Common myeloid progenitor, CD34-positive (primary cell): ENCODE measurements at regions of chr5 and their contacts with region 1.

Region 1: GRCh38 chr5:142145106-142145900 is 36.7 kb downstream of the NDFIP1 start:
- DNase-seq: peak; percentile 68 to 85 (median 79)
- H3K4me3 ChIP-seq: no peak overlapping the region
- H3K27ac ChIP-seq: no peak overlapping the region
- H3K4me1 ChIP-seq: no peaks in the 10 kb centered on the region
- H3K27me3 ChIP-seq: no peaks in the 10 kb centered on the region

Region 2: DNA sequence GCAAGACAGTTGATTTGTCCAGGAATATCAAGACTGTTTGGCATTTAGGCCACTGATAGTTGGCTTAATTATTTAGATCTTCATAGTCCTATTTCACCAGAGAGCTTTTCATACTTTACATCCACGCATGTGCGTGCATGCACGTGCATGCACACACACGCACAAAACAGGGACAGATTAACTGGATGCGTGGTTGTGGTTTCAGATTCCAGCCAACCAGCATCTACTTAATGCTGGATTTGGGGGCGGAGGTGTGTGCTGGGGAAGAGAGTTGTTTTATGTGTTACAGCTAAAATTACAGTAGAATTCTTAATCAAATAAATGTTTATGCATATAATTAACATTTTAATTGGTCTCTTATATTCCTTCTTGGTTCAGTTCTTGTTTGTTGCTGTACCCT is 169.1 kb before region 1 on chr5:
- CTCF ChIA-PET with region 1: interaction called, 10 read pairs
- POLR2A ChIA-PET with region 1: no interaction called
- DNase-seq: no peak
- H3K4me3 ChIP-seq: no peak overlapping the region
- H3K27ac ChIP-seq: no peak overlapping the region
- H3K4me1 ChIP-seq: no peaks in the 10 kb centered on the region
- H3K27me3 ChIP-seq: no peaks in the 10 kb centered on the region

Region 3: GRCh38 chr5:141992349-141992963 is 152.8 kb before region 1 on chr5:
- CTCF ChIA-PET with region 1: interaction called, 163 read pairs
- POLR2A ChIA-PET with region 1: no interaction called
- DNase-seq: peak; percentile 68 to 83 (median 72)
- H3K4me3 ChIP-seq: no peak overlapping the region
- H3K27ac ChIP-seq: no peak overlapping the region
- H3K4me1 ChIP-seq: no peaks in the 10 kb centered on the region
- H3K27me3 ChIP-seq: no peaks in the 10 kb centered on the region

Region 4: DNA sequence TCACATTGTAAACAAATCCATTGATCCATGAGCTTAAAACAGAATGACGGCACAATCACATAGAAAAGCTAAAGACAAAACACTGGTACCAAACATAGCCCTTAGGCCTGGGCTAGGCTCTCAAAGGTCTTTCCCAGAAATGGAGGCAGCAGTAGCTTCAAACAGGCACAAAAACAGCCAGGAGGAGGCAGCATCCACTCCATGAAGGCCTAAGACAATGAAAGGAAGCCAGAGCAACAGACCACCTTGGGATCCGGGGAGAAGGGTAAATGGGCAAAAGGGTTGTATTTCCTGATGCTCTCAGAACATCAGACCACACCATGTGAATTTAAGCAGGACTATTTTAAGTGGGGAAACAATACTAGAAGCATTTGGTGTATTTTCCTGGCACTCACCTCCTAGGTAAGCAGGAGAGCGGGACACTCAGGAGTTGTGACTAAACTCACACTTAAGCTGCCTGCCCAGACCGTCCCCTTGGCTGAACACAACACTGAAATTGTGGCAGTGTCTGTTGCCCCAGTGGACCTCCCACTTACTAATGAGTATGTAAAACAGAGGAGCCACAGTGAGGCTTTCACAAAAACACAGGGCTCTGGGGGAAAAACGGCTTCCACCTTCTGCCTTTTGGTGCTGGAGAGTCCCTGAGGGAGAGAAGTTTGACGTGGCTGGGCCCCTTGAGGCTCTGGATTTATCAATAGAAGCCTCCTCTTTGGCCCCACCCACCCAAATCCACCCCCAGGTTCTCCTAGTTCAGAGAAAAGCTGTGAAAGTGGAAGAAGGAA is 144.4 kb before region 1 on chr5:
- CTCF ChIA-PET with region 1: interaction called, 15 read pairs
- POLR2A ChIA-PET with region 1: no interaction called
- DNase-seq: no peak
- H3K4me3 ChIP-seq: no peak overlapping the region
- H3K27ac ChIP-seq: no peak overlapping the region
- H3K4me1 ChIP-seq: peaks cover 0 to 7% (median 0%) of the 10 kb centered on the region in 4 experiments
- H3K27me3 ChIP-seq: peaks cover 0 to 7% (median 3%) of the 10 kb centered on the region in 5 experiments

Region 5: DNA sequence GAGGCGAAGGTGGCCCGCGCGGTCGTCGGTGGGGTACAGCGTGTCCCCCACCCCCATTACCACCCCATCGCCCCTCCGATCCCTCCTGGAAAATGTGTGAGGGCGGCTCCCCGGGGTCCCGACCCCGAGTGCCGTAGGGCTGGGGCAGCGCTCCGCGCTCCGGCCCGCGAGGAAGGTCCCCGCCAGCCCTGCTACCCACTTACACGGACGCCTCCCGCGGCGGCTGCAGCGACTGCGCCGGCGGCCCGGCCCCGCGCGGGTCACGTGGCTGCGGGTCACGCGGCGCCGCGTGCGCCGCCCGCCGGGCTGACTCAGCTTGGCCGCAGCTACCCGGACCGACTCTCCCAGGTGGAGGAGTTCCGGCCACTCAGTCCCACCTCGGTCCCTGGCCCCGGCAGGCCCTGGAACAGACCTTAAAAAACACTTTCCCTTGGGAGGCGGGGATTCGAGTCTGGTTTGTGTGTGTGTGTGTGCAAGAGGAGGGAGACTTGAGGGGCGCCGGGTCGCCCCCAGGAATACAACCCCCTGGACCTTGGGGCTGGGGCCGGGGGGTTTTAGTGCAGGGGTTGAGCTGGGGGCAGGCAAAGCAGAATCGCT is 132.4 kb before region 1 on chr5 and contains the start of gene GNPDA1:
- CTCF ChIA-PET with region 1: interaction called, 53 read pairs
- POLR2A ChIA-PET with region 1: no interaction called
- DNase-seq: peak; percentile 53 to 74 (median 66)
- H3K4me3 ChIP-seq: peak within 1 kb of the TSS; percentile 2 to 65 (median 50)
- H3K27ac ChIP-seq: peak within 1 kb of the TSS in 1 of 2 experiments; percentile 62
- H3K4me1 ChIP-seq: peaks cover 17 to 41% (median 32%) of the 10 kb centered on the region in 4 experiments
- H3K27me3 ChIP-seq: peaks cover 0 to 36% (median 15%) of the 10 kb centered on the region in 5 experiments

Region 6: DNA sequence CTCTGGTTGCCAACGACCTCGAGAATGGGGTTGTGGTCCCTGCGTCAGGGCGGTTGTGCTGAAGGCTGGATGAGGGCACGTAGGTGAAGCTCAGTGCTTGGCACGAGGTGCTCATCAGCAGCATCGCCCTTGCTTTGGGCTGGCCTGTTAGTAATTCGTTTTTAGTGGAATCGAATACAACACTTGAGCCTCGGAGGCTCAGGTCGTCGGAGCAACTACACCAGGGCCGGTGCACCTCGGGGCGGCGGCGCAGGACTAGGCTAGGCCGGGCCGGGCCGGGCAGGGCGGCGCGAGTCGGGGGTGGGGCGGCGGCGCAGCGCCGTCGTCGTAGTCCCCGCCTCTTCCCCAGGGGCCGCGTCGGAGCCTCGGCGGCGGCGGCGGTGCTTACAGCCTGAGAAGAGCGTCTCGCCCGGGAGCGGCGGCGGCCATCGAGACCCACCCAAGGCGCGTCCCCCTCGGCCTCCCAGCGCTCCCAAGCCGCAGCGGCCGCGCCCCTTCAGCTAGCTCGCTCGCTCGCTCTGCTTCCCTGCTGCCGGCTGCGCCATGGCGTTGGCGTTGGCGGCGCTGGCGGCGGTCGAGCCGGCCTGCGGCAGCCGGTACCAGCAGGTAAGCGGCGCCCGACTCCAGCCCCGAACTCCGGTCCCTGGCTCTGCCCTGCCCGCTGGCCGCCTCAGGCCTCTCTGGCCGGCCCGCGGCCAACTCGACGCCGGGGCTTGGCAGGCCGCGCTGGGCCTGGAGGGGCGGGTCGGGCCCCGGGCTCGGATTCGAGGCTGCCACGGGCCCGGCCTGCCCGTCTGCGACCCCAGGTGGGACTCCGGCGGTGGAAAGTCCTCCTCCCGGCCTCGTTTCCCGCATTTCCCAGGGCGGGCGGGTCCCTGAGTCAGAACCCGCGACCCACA is 36.6 kb before region 1 on chr5 and contains the start of gene NDFIP1:
- CTCF ChIA-PET with region 1: interaction called, 11 read pairs
- POLR2A ChIA-PET with region 1: no interaction called
- DNase-seq: peak; percentile 80 to 89 (median 81)
- H3K4me3 ChIP-seq: peak within 1 kb of the TSS; percentile 75 to 96 (median 91)
- H3K27ac ChIP-seq: peak within 1 kb of the TSS; percentile 67 to 88
- H3K4me1 ChIP-seq: peaks cover 4 to 35% (median 22%) of the 10 kb centered on the region in 4 experiments
- H3K27me3 ChIP-seq: no peaks in the 10 kb centered on the region

Region 7: GRCh38 chr5:142133330-142134206 is 11.7 kb before region 1 on chr5:
- CTCF ChIA-PET with region 1: interaction called, 24 read pairs
- POLR2A ChIA-PET with region 1: no interaction called
- DNase-seq: no peak
- H3K4me3 ChIP-seq: peak overlapping the region in 1 of 7 experiments; percentile 30
- H3K27ac ChIP-seq: no peak overlapping the region
- H3K4me1 ChIP-seq: peaks cover 3 to 26% (median 15%) of the 10 kb centered on the region in 4 experiments
- H3K27me3 ChIP-seq: no peaks in the 10 kb centered on the region

Region 8: GRCh38 chr5:142235055-142235797 is 89.9 kb after region 1 on chr5:
- CTCF ChIA-PET with region 1: no interaction called
- POLR2A ChIA-PET with region 1: no interaction called
- DNase-seq: no peak
- H3K4me3 ChIP-seq: no peak overlapping the region
- H3K27ac ChIP-seq: no peak overlapping the region
- H3K4me1 ChIP-seq: no peaks in the 10 kb centered on the region
- H3K27me3 ChIP-seq: peaks cover 0 to 23% (median 2%) of the 10 kb centered on the region in 5 experiments